A549 (cell line): ENCODE measurements at regions of chr5 and their contacts with region 1.

Region 1: DNA sequence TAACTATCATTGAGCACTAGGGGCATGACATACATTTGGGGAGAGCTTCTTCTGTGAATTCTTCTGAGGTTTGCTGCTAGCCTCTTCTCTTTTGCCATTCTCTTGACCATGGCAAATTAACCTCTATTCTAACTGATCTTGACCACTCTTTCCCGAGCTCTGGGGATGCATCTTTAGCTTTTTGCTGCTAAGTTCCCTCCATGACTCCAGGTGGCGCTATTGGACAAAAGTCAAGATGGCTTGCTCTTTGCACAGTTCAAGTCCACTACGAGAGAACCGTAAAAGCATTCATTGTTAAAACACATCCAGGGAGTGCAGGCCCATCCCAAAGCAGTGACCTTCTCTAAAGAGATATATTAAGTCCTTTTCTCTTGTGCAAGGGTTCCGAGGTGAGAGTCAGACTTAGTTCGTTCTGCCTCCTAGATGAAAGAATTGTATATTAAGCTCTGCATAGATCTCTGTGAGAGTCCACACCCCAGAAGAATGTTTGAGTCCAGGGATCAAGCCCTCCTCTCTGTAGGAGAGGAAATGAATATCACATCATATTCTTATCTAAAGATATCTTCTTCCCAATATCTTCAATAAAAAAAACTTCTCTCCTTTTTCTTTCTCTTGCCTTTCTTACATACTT is 1152.9 kb upstream of the CDH6 start:
- DNase-seq: peak; percentile 5 to 79
- ATAC-seq: peak in 1 of 2 experiments; percentile 93; a peak in 3 of 6 replicates
- H3K4me3 ChIP-seq: no peak overlapping the region
- H3K27ac ChIP-seq: no peak overlapping the region
- H3K4me1 ChIP-seq: no peaks in the 10 kb centered on the region
- CTCF ChIP-seq: peak; percentile 62
- EP300 ChIP-seq: no peak
- POLR2A ChIP-seq: no peak
- RAD21 ChIP-seq: peak; percentile 81 to 89

Region 2: DNA sequence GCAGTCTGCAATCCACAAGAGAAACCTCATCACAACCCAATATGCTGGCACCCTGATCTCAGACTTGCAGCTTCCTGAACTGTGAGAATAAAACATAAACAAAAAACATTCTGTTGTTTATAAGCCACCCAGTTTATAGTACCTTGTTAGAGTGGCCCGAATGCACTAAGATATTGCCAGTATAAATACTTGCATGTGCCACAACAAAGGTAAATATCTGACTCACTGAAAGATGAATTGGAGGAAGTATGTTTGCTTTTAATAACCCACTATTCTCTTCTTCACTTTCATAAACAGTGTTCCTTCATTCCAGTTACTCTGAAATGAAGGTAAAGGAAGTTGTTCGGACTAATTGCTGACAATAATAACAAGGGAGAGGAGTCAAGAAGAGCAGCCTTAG is 10.5 kb before region 1 on chr5:
- CTCF ChIA-PET with region 1: interaction called, 11 read pairs
- POLR2A ChIA-PET with region 1: no interaction called
- DNase-seq: no peak
- ATAC-seq: no peak
- H3K4me3 ChIP-seq: no peak overlapping the region
- H3K27ac ChIP-seq: no peak overlapping the region
- H3K4me1 ChIP-seq: no peaks in the 10 kb centered on the region
- CTCF ChIP-seq: no peak
- EP300 ChIP-seq: no peak
- POLR2A ChIP-seq: no peak
- RAD21 ChIP-seq: no peak

Region 3: GRCh38 chr5:30106596-30106995 is 66.0 kb after region 1 on chr5:
- CTCF ChIA-PET with region 1: no interaction called
- POLR2A ChIA-PET with region 1: no interaction called
- DNase-seq: no peak
- ATAC-seq: no peak
- H3K4me3 ChIP-seq: no peak overlapping the region
- H3K27ac ChIP-seq: no peak overlapping the region
- H3K4me1 ChIP-seq: peaks cover 13% of the 10 kb centered on the region
- CTCF ChIP-seq: no peak
- EP300 ChIP-seq: no peak
- POLR2A ChIP-seq: no peak
- RAD21 ChIP-seq: no peak

Region 4: GRCh38 chr5:31186672-31187267 is 1146.2 kb after region 1 on chr5:
- CTCF ChIA-PET with region 1: interaction called, 14 read pairs
- POLR2A ChIA-PET with region 1: no interaction called
- DNase-seq: peak; percentile 25 to 38
- ATAC-seq: 0 out of 6 replicates have a peak, but pooled peaks of 1 of the 2 experiments have one; percentile 59
- H3K4me3 ChIP-seq: no peak overlapping the region
- H3K27ac ChIP-seq: no peak overlapping the region
- H3K4me1 ChIP-seq: no peaks in the 10 kb centered on the region
- CTCF ChIP-seq: peak; percentile 65
- EP300 ChIP-seq: no peak
- POLR2A ChIP-seq: no peak
- RAD21 ChIP-seq: peak; percentile 45 to 50

Region 5: DNA sequence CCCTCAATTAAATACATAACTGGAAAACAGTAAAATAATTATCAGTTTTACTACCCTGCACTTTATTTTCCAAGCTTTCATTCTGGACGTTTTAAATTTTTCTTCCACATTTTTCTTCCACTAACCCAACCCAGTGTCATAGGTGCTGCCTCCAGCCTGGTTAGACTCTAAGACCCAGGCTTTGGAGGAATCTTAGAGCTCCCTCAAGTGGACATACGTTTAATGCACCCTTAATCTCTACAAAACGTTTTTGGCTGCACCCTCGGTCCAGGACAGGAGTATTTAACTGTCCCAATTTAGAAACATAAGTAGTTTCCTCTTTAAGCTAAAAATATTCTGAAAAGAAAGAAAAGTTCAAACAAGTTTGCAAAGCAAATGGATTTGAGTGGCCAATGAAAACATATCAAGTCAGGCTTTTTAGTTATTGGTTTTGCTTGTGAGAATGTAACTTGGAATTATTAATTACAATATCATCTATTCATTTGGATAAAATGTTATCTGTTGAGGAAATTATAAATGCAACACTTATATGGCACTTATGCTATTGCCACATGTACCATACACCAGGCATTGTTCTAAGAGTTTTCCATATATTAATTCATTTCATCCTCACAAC is 1191.8 kb after region 1 on chr5:
- CTCF ChIA-PET with region 1: interaction called, 18 read pairs
- POLR2A ChIA-PET with region 1: no interaction called
- DNase-seq: peak; percentile 49 to 56
- ATAC-seq: peak; percentile 73 to 90; a peak in 5 of 6 replicates
- H3K4me3 ChIP-seq: no peak overlapping the region
- H3K27ac ChIP-seq: no peak overlapping the region
- H3K4me1 ChIP-seq: no peaks in the 10 kb centered on the region
- CTCF ChIP-seq: peak; percentile 69
- EP300 ChIP-seq: no peak
- POLR2A ChIP-seq: no peak
- RAD21 ChIP-seq: peak; percentile 68 to 74; a peak in 4 of 5 replicates